HepG2 (cell line): ENCODE measurements at regions of chr6 and their contacts with region 1.

Region 1: GRCh38 chr6:25112207-25112874 is 166.8 kb upstream of the CARMIL1 start:
- DNase-seq: no peak
- ATAC-seq: no peak
- H3K4me3 ChIP-seq: no peak overlapping the region
- H3K27ac ChIP-seq: no peak overlapping the region
- H3K4me1 ChIP-seq: no peaks in the 10 kb centered on the region
- H3K27me3 ChIP-seq: no peaks in the 10 kb centered on the region; a peak in 1 of 5 replicates
- CTCF ChIP-seq: no peak
- EP300 ChIP-seq: no peak
- POLR2A ChIP-seq: no peak
- RAD21 ChIP-seq: no peak

Region 2: DNA sequence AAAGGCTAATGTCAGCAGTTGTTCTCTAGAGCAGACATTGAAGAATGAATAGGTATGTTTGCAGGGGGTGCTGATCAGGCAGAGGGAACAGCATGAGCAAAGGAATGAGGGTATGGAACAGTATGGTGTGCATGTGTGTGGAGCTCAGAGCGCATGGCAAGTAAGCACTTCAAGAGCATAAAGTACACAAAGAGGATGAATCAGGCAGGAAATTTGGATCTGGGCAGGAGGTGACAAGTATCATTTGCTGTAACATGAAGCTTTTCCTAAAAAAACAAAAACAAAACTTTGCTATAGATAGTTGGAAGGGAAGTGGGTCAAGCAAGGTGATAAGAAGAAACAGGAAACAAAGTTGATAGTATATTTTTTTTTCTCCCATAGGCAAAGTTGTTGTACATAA is 1796.2 kb before region 1 on chr6:
- CTCF ChIA-PET with region 1: no interaction called
- POLR2A ChIA-PET with region 1: no interaction called
- in situ Hi-C with region 1: no loop called
- intact Hi-C with region 1: loop called (anchors 10 kb)
- DNase-seq: no peak
- ATAC-seq: no peak
- H3K4me3 ChIP-seq: no peak overlapping the region
- H3K27ac ChIP-seq: no peak overlapping the region
- H3K4me1 ChIP-seq: no peaks in the 10 kb centered on the region
- H3K27me3 ChIP-seq: no peaks in the 10 kb centered on the region
- CTCF ChIP-seq: no peak
- EP300 ChIP-seq: no peak
- POLR2A ChIP-seq: no peak
- RAD21 ChIP-seq: no peak